ENCODE measurements at regions of chr2 and their contacts with region 1.

Region 1: DNA sequence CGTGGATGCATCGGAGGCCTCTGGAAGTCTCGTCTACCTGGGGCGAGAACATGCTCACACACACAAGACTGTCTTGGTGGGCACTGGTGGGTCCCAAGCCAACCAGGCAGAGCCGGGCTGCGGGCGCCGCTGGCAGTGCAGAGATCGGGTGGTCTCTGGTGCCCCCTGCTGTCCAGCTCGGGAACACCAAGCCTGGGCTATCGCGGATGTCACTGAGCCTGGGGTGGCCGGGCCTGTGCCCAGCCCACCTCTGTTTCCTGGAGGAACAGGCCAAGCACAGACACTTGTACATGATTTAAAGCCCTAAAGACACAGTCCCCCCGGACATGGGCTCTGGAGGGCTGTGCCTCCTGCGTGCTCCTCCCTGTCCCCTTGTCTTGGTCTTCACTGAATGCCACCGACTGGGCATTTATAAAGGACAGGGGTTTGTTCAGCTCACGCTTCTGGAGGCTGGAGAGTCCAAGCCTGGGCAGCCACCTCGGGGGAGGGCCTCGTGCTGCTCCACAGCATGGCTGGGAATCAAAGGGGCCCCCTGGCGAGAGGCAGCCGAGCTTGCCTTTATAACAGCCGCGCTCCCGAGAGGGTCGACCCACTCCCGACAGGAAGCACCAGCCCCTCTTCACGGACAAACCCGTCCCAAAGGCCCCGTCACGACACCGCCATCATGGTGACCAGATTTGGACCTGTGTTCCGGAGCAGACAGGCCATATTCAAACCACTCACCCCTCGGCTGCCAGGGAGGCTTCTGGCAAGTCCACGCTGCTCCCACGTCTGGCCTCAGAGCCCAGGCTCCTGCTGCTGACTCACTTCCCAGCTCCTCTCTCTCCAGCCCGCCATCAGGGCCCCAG is 3.6 kb upstream of the OTOS start:
- DNase-seq: peak; percentile 88
- ATAC-seq: peak; percentile 96
- H3K4me3 Mint-ChIP-seq: no peak overlapping the region
- H3K27ac Mint-ChIP-seq: no peak overlapping the region
- H3K4me1 Mint-ChIP-seq: no peaks in the 10 kb centered on the region
- H3K27me3 Mint-ChIP-seq: peaks cover 4% of the 10 kb centered on the region

Region 2: DNA sequence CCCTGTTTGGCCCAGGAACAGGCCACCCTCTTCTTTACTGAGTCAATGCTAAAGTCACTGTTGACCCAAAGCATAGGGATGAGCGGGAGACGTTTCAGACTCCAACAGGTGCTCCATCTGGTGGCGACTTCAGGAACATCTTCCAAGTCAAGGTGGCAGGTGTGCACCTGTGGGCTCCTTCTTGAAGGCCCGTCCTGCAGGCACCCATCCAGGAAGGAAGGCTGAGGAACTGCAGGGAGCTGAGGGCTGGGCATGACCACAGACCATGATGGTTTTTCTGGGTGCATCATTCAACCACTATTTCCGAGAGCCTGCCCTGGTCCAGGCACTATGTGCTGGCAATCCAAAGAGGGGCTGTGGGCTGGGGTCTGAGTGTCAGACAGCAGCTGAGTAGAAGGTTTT is 261.7 kb before region 1 on chr2:
- CTCF ChIA-PET with region 1: no interaction called
- POLR2A ChIA-PET with region 1: no interaction called
- intact Hi-C with region 1: no loop called
- DNase-seq: peak; percentile 77
- ATAC-seq: peak; percentile 75
- H3K4me3 Mint-ChIP-seq: no peak overlapping the region
- H3K27ac Mint-ChIP-seq: no peak overlapping the region
- H3K4me1 Mint-ChIP-seq: peaks cover 4% of the 10 kb centered on the region
- H3K27me3 Mint-ChIP-seq: no peaks in the 10 kb centered on the region

Region 3: GRCh38 chr2:240060977-240061591 is 82.9 kb before region 1 on chr2:
- CTCF ChIA-PET with region 1: interaction called, 119 read pairs
- POLR2A ChIA-PET with region 1: no interaction called
- intact Hi-C with region 1: loop called (anchors 1 kb)
- DNase-seq: peak; percentile 67
- ATAC-seq: peak; percentile 72
- H3K4me3 Mint-ChIP-seq: no peak overlapping the region
- H3K27ac Mint-ChIP-seq: no peak overlapping the region
- H3K4me1 Mint-ChIP-seq: no peaks in the 10 kb centered on the region
- H3K27me3 Mint-ChIP-seq: peaks cover 17% of the 10 kb centered on the region